ENCODE measurements at regions of chr3 and their contacts with region 1.

Region 1: DNA sequence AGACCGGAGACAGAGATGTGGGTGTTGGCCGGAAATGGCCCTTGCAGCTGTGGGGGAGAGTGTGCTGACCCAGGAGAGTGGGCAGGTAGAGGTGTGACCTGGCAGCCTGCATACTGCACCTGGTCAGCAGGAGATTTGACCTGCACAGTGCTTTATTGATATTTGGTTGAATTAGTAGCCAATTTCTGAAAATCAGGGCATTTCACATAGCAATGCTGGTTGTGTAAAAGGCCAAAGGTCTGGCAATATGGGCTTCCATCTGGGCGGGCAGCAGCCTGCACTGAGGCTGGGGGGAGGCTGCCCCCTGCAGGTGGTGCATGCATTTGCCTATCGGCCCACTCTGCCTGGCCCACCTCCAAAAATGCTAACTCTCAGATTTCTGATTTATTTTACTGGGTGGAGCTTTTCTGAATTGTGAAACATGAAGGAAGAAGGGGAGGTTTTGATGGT is 9.4 kb upstream of the MGLL start:
- DNase-seq: peak; percentile 33 to 47 (median 44)
- ATAC-seq: peak; percentile 65; the same call in 2 of the 3 replicates
- H3K4me3 ChIP-seq: no peak overlapping the region
- H3K27ac ChIP-seq: no peak overlapping the region
- H3K4me1 ChIP-seq: no peaks in the 10 kb centered on the region; a peak in 1 of 5 replicates
- H3K27me3 ChIP-seq: 0 out of 5 replicates have a peak, but pooled peaks cover 0 to 4% of the 10 kb centered on the region in 2 experiments
- CTCF ChIP-seq: peak; percentile 57 to 66 (median 62); a peak in 5 of 6 replicates
- EP300 ChIP-seq: no peak
- POLR2A ChIP-seq: no peak
- RAD21 ChIP-seq: peak in 1 of 2 experiments; percentile 69; a peak in 3 of 4 replicates

Region 2: DNA sequence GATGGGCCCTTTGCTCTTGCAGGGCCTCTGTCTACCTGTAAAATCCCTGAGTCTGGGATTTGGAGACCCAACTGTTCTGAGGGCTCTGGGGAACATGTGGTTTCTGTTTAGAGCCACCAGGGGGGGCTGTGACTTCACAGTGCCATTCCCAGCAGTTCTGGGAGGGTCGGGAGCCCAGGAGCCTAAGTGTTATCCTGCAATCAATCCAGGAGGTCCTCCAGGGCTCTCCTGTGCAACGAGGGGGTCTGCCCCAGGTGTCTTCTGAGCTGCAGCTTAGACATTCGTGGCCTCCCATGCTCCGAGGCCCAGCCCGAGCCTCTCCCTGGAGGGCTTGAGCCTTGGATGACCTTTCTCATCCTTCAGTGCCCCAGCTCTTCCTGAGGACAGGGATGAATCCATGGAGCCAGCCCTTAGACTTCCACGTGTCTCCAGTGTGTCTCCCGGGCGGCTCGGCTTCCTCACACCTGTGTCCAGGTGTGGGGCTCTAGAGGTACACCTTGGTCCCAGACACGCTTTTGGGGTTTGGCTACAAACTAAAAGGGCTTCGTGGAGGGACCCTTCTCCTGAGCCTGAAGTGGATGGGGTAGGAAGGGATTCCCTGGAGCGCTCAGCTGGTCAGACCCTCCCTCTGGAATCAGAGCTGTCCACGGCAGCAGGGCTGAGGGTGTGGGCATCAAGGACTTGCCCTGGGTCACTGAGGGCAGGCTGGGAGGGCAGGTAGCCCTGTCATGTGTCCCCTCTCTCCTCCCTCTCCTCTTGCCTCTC is 179.3 kb before region 1 on chr3:
- CTCF ChIA-PET with region 1: no interaction called
- POLR2A ChIA-PET with region 1: no interaction called
- in situ Hi-C with region 1: no loop called
- intact Hi-C with region 1: loop called (anchors 10 kb)
- DNase-seq: peak; percentile 47 to 56 (median 52)
- ATAC-seq: peak; percentile 90
- H3K4me3 ChIP-seq: no peak overlapping the region
- H3K27ac ChIP-seq: no peak overlapping the region
- H3K4me1 ChIP-seq: no peaks in the 10 kb centered on the region
- H3K27me3 ChIP-seq: no peaks in the 10 kb centered on the region
- CTCF ChIP-seq: peak; percentile 67 to 74 (median 67)
- EP300 ChIP-seq: no peak
- POLR2A ChIP-seq: no peak
- RAD21 ChIP-seq: peak; percentile 59 to 69

Region 3: DNA sequence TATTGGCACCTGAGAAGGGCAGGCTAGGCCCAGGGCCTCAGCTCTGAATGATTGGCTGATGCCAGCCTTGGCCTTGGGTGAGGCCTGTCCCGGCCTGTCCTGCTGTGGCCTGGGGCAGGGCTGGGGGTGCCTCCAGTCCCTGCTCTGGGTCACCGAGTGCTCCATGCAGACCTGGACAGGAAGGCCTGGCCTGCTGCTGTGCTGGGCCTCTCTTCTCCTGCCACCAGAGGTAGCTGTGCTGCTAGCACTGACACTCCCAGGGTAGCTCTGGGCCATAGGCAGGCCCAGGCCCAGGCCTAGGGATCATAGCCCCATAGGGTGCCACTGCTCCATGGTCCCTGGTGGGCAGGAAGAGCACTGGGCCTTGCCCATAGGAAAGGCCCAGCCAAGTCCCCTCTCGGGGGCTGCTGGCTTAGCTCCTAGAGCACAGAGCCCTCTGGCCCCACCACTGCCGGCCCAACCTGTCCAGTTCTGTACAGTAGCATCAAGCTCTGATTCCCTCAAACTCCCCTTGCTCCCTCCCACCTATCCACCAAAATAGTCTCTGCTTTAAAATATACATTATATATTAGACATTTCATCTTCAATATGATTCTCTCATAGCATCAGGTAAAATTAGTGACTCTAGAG is 140.8 kb before region 1 on chr3:
- CTCF ChIA-PET with region 1: no interaction called
- POLR2A ChIA-PET with region 1: no interaction called
- in situ Hi-C with region 1: no loop called
- intact Hi-C with region 1: loop called (anchors 5 kb)
- DNase-seq: peak in 1 of 4 experiments; percentile 46
- ATAC-seq: peak; percentile 99
- H3K4me3 ChIP-seq: no peak overlapping the region
- H3K27ac ChIP-seq: no peak overlapping the region
- H3K4me1 ChIP-seq: peaks cover 0 to 2% of the 10 kb centered on the region in 2 experiments; a peak in 1 of 5 replicates
- H3K27me3 ChIP-seq: peaks cover 0 to 25% of the 10 kb centered on the region in 2 experiments; a peak in 4 of 5 replicates
- CTCF ChIP-seq: peak; percentile 58 to 66 (median 61)
- EP300 ChIP-seq: no peak
- POLR2A ChIP-seq: no peak
- RAD21 ChIP-seq: peak; percentile 53 to 68

Region 4: GRCh38 chr3:128194843-128195242 is 363.1 kb after region 1 on chr3:
- CTCF ChIA-PET with region 1: no interaction called
- POLR2A ChIA-PET with region 1: no interaction called
- in situ Hi-C with region 1: no loop called
- intact Hi-C with region 1: no loop called
- DNase-seq: peak in 1 of 4 experiments; percentile 7
- ATAC-seq: no peak
- H3K4me3 ChIP-seq: no peak overlapping the region
- H3K27ac ChIP-seq: no peak overlapping the region
- H3K4me1 ChIP-seq: peaks cover 0 to 27% of the 10 kb centered on the region in 2 experiments; a peak in 3 of 5 replicates
- H3K27me3 ChIP-seq: no peaks in the 10 kb centered on the region
- CTCF ChIP-seq: no peak
- EP300 ChIP-seq: no peak
- POLR2A ChIP-seq: no peak
- RAD21 ChIP-seq: no peak

Measured in K562 (cell line).